Esophagus muscularis mucosa (tissue), 4 donors: ENCODE measurements at regions of chrX and their contacts with region 1.

Region 1: DNA sequence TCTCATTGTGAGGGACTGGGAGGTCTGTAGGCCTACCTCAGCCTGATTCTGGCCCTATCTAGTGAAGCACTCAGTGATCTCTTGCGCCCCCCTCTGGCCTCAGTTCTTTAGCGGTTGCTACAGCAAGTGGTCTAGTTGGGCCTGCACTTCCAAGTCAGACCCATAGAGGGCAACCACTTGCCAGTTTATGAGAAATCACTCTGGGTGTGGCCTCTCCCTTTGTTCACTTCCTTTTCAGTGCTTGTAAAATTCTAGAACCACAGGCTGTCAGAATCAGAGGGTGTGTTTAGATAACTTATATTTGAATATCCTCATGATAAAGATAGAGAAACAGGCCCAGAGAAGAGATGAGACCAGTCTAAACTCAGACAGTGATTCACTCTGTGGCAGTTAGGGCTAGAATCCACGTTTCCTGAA is 60.9 kb upstream of the LAS1L start:
- DNase-seq: peak; percentile 97
- H3K4me3 ChIP-seq: no peak overlapping the region
- H3K27ac ChIP-seq: peak overlapping the region; percentile 72 to 78 (median 76)
- H3K4me1 ChIP-seq: peaks cover 15 to 21% (median 16%) of the 10 kb centered on the region in 4 donors
- H3K27me3 ChIP-seq: no peaks in the 10 kb centered on the region
- CTCF ChIP-seq: peak; percentile 96 to 97 (median 97)
- EP300 ChIP-seq: no peak
- POLR2A ChIP-seq: no peak

Region 2: DNA sequence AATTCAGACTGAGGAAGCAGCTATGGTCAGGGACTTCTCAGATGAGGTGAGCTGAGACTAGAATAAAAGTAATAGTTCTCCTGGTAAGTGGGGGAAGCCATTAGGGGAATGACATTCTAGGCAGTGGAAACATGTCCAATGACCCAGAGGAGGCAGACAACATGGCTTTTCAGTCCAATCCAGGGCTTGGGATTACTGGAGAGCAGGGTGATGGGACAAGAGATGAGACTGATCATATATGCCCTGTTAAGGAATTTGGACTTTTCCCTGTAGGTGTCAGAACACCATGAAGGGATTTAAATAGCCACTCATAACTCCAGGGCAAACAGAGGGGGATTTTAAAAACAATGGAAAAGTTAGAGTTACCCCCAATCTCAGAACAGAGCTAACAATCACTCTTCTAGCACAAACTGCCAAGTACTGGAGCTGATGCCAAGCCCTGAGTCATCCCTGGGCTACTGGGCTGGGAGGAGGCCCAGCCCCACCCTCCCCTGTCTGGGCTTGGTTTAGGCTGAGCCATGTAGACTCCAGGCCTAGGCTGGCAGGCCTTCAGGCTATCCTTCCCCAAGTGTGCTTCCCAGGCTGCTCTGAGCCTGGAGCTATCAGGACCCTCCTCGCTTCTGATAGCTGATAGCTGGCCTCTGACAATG is 49.3 kb after region 1 on chrX:
- intact Hi-C with region 1: loop called (anchors 2 kb)
- DNase-seq: no peak
- H3K4me3 ChIP-seq: no peak overlapping the region
- H3K27ac ChIP-seq: peak overlapping the region; percentile 67 to 75 (median 71)
- H3K4me1 ChIP-seq: peaks cover 29 to 35% (median 32%) of the 10 kb centered on the region in 4 donors
- H3K27me3 ChIP-seq: no peaks in the 10 kb centered on the region
- CTCF ChIP-seq: no peak
- EP300 ChIP-seq: no peak
- POLR2A ChIP-seq: no peak

Region 3: GRCh38 chrX:65667503-65668376 is 72.3 kb after region 1 on chrX and contains the start of gene MSN:
- intact Hi-C with region 1: loop called (anchors 2 kb)
- DNase-seq: no peak
- H3K4me3 ChIP-seq: peak within 1 kb of the TSS; percentile 72 to 74 (median 73)
- H3K27ac ChIP-seq: peak within 1 kb of the TSS; percentile 95 to 96 (median 95)
- H3K4me1 ChIP-seq: peaks cover 29 to 41% (median 33%) of the 10 kb centered on the region in 4 donors
- H3K27me3 ChIP-seq: no peaks in the 10 kb centered on the region
- CTCF ChIP-seq: no peak
- EP300 ChIP-seq: no peak
- POLR2A ChIP-seq: peak; percentile 55
- total RNA-seq, gene MSN: 206 to 311 (median 290) TPM

Region 4: GRCh38 chrX:65706041-65706828 is 110.8 kb after region 1 on chrX:
- intact Hi-C with region 1: loop called (anchors 5 kb)
- DNase-seq: no peak
- H3K4me3 ChIP-seq: no peak overlapping the region
- H3K27ac ChIP-seq: peak overlapping the region; percentile 80 to 87 (median 82)
- H3K4me1 ChIP-seq: peaks cover 57 to 78% (median 69%) of the 10 kb centered on the region in 4 donors
- H3K27me3 ChIP-seq: no peaks in the 10 kb centered on the region
- CTCF ChIP-seq: no peak
- EP300 ChIP-seq: no peak
- POLR2A ChIP-seq: no peak